Colonic mucosa (tissue), 4 donors: ENCODE measurements at regions of chr2 and their contacts with region 1.

Region 1: GRCh38 chr2:240143801-240144648 is 3.6 kb upstream of the OTOS start:
- DNase-seq: peak; percentile 71
- H3K4me3 ChIP-seq: no peak overlapping the region
- H3K27ac ChIP-seq: no peak overlapping the region
- H3K4me1 ChIP-seq: no peaks in the 10 kb centered on the region
- H3K27me3 ChIP-seq: no peaks in the 10 kb centered on the region
- CTCF ChIP-seq: peak; percentile 88

Region 2: DNA sequence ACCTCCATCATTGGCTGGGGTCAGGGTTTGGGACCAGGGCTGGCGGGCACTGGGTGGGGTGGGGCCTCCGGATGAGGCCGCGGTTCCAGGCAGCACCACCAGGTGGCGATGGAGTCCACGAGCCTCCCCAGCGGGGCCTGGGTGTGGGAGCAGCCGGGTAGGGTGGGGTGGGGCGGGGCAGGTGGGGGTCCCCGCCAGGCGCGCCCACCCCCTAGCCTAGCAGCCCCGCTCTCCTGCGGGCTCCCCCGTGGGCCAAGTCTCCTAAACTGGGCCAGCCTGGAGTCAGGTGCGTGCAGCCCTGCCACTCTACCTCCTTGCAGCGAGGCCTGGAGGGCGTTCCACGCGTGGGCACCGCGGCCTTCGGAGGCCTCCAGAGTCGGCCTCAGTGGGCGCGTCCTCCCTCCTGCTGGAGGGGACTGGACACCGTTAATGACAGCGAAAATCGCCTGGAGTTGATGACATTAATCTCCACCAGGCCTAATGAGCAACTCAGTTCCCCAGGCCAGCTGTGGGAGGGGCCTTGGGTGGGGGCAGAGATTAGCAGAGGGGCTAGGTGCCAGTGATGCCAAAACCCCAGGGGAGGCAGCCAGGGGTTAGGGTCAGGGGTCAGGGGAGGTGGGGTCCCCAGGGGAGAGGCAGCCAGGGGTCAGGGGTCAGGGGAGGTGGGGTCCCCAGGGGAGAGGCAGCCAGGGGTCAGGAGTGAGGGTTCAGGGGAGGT is 1108.5 kb before region 1 on chr2:
- intact Hi-C with region 1: loop called (anchors 10 kb)
- DNase-seq: peak; percentile 58
- H3K4me3 ChIP-seq: no peak overlapping the region
- H3K27ac ChIP-seq: no peak overlapping the region
- H3K4me1 ChIP-seq: no peaks in the 10 kb centered on the region
- H3K27me3 ChIP-seq: no peaks in the 10 kb centered on the region
- CTCF ChIP-seq: peak; percentile 92

Region 3: GRCh38 chr2:240060977-240061591 is 82.9 kb before region 1 on chr2:
- intact Hi-C with region 1: loop called (anchors 2 kb)
- DNase-seq: peak; percentile 47
- H3K4me3 ChIP-seq: no peak overlapping the region
- H3K27ac ChIP-seq: no peak overlapping the region
- H3K4me1 ChIP-seq: no peaks in the 10 kb centered on the region
- H3K27me3 ChIP-seq: no peaks in the 10 kb centered on the region
- CTCF ChIP-seq: peak; percentile 36